ENCODE measurements at regions of chr1 and their contacts with region 1.

Region 1: DNA sequence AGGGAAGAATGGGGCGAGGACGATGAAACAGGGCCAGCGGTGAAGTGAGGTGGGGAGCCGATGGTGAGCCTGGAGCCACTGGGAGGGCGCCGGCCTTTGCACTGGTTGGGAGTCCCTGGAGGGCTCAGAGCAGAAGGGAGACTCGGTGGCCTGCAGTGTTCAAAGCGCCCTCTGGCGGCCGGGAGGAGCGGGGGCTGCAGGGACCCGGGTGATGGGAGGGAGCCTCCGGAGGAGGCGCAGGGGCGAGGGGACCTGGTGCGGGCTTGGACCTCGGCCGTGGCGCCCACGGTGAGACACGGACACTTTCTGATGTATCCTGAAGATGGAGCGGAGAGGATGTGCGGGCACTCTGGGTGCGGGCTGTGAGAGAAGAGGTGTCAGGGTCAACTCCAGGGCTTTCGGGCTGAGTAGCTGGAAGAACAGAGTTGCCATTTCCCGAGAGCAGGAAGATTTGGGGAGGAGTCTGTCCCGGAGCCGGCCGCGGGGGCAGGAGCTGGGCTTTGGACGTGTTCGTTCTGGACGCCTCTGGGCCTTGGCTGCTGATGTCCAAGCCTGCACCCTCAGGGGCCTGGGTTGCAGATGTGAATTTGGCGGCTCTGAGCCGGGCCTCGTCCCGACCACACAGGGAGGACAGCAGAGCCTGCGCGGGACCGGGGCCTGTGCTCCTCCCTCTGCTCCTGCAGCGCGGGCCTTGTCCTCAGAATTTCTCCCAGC is 29.7 kb downstream of the HEYL start:
- DNase-seq: peak in 1 of 2 donors; percentile 82
- H3K4me3 ChIP-seq: no peak overlapping the region
- H3K27ac ChIP-seq: peak overlapping the region in 1 of 2 donors; percentile 34
- H3K4me1 ChIP-seq: no peaks in the 10 kb centered on the region
- H3K27me3 ChIP-seq: no peaks in the 10 kb centered on the region
- CTCF ChIP-seq: peak; percentile 69 to 79 (median 75)

Region 2: GRCh38 chr1:39034114-39034654 is 575.6 kb before region 1 on chr1:
- intact Hi-C with region 1: no loop called
- DNase-seq: no peak
- H3K4me3 ChIP-seq: no peak overlapping the region
- H3K27ac ChIP-seq: no peak overlapping the region
- H3K4me1 ChIP-seq: no peaks in the 10 kb centered on the region
- H3K27me3 ChIP-seq: no peaks in the 10 kb centered on the region
- CTCF ChIP-seq: no peak

Region 3: DNA sequence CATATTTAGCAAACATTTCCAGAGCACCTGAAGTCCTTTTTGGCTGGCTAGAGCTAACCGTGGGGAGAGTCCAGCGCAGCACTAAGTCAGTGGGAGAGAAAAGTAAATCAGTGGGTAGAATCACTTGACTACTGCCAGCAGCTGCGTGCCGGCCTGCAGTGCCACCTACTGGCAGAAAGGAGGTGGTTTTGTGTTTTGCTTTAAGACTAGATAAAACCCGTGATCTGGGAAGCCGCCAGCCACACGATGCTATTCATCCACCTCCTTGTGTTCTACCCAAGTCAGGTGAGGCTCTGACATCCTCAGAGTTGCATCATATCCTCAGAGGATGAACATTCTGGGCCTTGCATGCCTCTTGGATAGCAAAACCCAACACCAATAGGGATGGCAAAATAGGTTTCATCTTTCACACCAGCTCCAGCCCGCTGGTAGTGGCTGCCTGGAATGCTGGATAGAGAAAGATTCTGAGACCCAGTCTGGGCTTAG is 43.8 kb after region 1 on chr1:
- intact Hi-C with region 1: loop called (anchors 1 kb)
- DNase-seq: peak; percentile 46 to 89
- H3K4me3 ChIP-seq: no peak overlapping the region
- H3K27ac ChIP-seq: no peak overlapping the region
- H3K4me1 ChIP-seq: peaks cover 0 to 5% of the 10 kb centered on the region in 2 donors
- H3K27me3 ChIP-seq: no peaks in the 10 kb centered on the region
- CTCF ChIP-seq: peak; percentile 92 to 94 (median 93)

Region 4: DNA sequence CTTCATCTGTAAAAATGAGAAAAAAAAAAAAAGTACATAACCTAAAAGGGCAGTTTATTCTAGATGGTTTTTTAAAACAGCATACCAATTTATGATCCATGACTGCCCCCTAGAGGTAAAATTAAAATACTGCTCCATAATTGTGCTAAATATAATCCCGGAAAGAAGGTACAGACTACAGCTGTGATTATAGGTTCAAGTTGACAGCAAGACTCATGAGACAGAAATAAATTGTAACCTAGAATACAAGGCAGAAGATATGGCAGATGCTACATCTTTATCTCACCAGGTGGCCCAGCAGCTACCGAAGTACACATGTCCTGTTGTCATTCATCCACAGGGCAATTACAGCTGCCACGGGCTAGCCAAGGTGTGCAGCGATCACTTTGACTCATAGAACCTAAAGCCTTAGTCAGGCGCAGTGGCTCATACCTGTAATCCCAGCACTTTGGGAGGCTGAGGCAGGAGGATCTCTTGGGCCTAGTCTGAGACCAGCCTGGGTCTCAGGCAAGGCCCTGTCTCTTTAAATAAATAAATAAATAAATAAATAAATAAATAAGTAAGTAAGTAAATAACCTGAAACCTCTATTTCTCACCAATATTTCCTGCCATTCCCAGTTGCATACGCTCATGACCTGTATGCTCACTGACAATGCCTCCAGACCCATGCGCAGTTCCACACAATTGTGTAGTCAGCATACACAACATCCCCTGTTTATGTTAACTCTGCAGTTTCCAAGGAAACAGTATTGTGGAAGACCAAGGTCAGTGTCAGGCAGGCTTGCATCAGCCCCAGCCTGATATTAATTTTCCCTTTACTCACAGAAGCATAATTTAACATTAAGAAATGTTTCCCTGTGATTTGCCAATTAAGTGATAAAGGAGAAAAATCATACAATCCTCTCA is 110.6 kb after region 1 on chr1:
- intact Hi-C with region 1: loop called (anchors 1 kb)
- DNase-seq: no peak
- H3K4me3 ChIP-seq: no peak overlapping the region
- H3K27ac ChIP-seq: no peak overlapping the region
- H3K4me1 ChIP-seq: no peaks in the 10 kb centered on the region
- H3K27me3 ChIP-seq: no peaks in the 10 kb centered on the region
- CTCF ChIP-seq: peak; percentile 55 to 70 (median 70)

Region 5: DNA sequence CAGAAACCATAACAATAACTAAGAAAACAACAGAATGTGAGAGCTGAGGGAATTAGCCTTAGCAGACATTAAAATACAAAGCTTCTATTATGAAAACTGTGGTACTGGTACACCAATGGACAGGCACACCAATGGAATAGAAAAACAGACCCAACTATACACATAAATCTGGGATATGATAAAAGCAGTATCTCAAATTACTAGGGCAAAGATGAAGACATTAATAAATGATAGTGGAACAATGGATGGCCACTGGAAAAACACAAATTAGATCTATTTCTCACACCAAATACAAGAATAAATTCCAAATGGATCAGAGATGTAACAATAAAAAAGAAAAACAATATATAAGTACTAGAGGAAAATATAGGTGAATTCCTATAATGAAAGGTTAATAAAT is 1477.1 kb after region 1 on chr1:
- intact Hi-C with region 1: no loop called
- DNase-seq: no peak
- H3K4me3 ChIP-seq: no peak overlapping the region
- H3K27ac ChIP-seq: no peak overlapping the region
- H3K4me1 ChIP-seq: no peaks in the 10 kb centered on the region
- H3K27me3 ChIP-seq: no peaks in the 10 kb centered on the region
- CTCF ChIP-seq: no peak

Measured in ascending aorta (tissue), 2 donors.